Esophagus muscularis mucosa (tissue), 4 donors: ENCODE measurements at regions of chr22 and their contacts with region 1.

Region 1: GRCh38 chr22:50507991-50508884 is at the start of gene NCAPH2:
- DNase-seq: no peak
- H3K4me3 ChIP-seq: peak within 1 kb of the TSS; percentile 87 to 98 (median 95)
- H3K27ac ChIP-seq: peak within 1 kb of the TSS; percentile 92 to 98 (median 96)
- H3K4me1 ChIP-seq: peaks cover 27 to 46% (median 38%) of the 10 kb centered on the region in 4 donors
- H3K27me3 ChIP-seq: no peaks in the 10 kb centered on the region
- CTCF ChIP-seq: peak in 1 of 3 experiments; percentile 26
- EP300 ChIP-seq: no peak
- POLR2A ChIP-seq: peak; percentile 23
- total RNA-seq, gene NCAPH2: 30.3 to 44.6 (median 41.7) TPM

Region 2: DNA sequence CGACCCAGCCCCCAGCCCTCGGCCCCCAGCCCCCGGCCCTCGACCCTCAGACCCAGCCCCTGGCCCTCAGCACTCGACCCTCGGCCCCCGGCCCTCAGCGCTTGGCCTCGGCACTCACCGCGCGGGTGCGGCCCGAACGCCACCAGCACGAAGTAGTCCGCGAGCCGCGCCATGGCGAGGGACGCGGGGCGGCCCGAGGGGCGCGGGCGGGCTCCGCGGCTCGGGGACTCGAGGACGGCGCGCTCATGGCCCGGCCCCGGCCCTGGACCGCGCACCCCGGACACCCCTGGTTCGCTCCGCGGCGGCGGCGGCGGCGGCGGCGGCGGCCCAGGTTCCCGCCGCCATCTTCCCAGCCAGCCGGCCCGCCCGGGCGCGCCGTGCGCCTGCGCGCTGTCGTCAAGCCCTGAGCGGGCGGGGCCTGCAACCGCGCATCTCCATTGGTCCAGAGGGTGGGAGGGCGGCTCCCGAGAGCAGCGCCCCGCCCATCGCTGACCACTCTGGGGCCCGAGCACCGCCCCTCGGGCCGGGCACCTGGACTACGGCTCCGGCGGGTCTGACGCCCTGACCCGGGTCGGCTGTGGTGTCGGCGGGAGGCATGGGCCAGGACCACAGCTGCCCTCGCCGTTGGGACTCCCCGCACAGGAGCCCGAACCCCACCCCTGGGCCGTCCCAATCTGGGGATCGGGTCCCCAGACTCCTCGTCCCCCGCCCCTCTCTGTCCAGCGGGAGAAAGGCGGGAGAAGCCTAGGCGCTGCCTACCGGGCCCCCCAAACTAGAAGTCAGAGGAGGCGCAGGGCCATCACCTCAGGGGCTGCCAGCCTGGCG is 33.4 kb before region 1 on chr22 and contains the start of gene SBF1:
- intact Hi-C with region 1: loop called (anchors 5 kb)
- DNase-seq: peak; percentile 96
- H3K4me3 ChIP-seq: peak within 1 kb of the TSS; percentile 84 to 98 (median 94)
- H3K27ac ChIP-seq: peak within 1 kb of the TSS; percentile 85 to 90 (median 90)
- H3K4me1 ChIP-seq: peaks cover 43 to 53% (median 50%) of the 10 kb centered on the region in 4 donors
- H3K27me3 ChIP-seq: peaks cover 0 to 15% (median 0%) of the 10 kb centered on the region in 4 donors
- CTCF ChIP-seq: no peak
- EP300 ChIP-seq: no peak
- POLR2A ChIP-seq: peak; percentile 8
- total RNA-seq, gene SBF1: 56.1 to 121 (median 86.9) TPM

Region 3: DNA sequence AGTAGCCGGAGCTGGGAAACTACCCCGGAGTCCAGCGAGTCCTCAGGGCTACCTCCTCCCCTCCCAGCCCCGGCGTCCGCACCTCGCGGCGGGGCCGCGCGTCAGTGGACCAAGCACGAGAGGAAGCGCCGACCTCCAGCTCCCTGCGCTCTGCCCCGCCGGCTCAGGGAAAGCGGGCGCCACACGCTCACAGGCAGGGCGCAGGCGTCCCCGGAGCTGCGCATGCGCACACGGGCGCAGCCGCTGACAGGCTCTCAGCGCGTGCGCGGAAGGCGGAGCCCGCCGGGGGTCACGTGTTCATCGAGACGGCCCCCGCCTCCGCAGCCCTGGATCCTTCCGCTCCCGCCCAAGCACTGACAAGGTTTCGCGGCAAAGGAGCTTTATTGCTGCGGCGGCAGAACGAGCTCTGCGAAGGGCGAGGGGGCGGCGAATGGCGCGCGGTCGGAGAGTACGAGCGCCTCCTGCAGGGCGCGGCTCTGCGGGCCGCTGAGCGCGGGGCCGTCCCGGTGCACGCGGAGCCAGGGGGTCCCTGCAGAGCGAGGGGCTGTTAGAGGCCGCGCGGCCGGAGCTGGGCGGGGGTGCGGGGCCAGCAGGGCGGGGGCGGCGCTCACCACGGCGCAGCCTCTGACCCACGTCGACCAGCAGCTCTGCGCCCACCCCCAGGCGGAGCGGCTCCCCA is 17.3 kb after region 1 on chr22 and contains the start of gene SCO2:
- intact Hi-C with region 1: loop called (anchors 2 kb)
- DNase-seq: peak; percentile 99
- H3K4me3 ChIP-seq: peak within 1 kb of the TSS; percentile 64 to 75 (median 68)
- H3K27ac ChIP-seq: peak within 1 kb of the TSS; percentile 88 to 93 (median 90)
- H3K4me1 ChIP-seq: peaks cover 24 to 62% (median 53%) of the 10 kb centered on the region in 4 donors
- H3K27me3 ChIP-seq: peaks cover 0 to 15% (median 6%) of the 10 kb centered on the region in 4 donors
- CTCF ChIP-seq: peak; percentile 36 to 54 (median 43)
- EP300 ChIP-seq: no peak
- POLR2A ChIP-seq: peak; percentile 18
- total RNA-seq, gene SCO2: 3.1 to 5.1 TPM in 2 of 4 donors, not detected in the others

Region 4: DNA sequence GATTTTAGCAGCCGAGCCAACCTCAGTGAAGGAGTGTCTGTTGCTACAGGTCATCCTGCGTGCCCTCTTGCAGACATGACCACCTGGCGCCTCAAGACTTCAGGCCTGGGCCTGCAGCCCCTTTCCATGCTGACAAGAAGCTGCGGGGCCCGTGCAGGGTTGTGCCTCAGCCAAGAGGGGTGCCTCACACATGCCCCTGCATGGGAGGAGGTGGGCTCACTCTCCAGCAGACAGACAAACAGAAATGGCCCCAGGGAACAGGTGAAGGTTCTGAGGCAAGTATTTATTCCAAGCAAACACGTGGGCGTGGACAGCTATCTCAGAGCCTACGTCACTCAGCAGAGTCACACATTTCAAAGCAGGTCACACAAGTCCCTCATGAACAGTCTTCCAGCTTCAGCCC is 60.4 kb after region 1 on chr22:
- intact Hi-C with region 1: loop called (anchors 5 kb)
- DNase-seq: no peak
- H3K4me3 ChIP-seq: no peak overlapping the region
- H3K27ac ChIP-seq: no peak overlapping the region
- H3K4me1 ChIP-seq: peaks cover 5 to 11% (median 7%) of the 10 kb centered on the region in 4 donors
- H3K27me3 ChIP-seq: no peaks in the 10 kb centered on the region
- CTCF ChIP-seq: no peak
- EP300 ChIP-seq: no peak
- POLR2A ChIP-seq: no peak